ENCODE measurements at regions of chr7 and their contacts with region 1.

Region 1: GRCh38 chr7:134875867-134876266 is 96.4 kb downstream of the CALD1 start:
- DNase-seq: no peak

Region 2: GRCh38 chr7:134852625-134853024 is 23.2 kb before region 1 on chr7:
- intact Hi-C with region 1: loop called (anchors 1 kb)
- DNase-seq: no peak

Region 3: DNA sequence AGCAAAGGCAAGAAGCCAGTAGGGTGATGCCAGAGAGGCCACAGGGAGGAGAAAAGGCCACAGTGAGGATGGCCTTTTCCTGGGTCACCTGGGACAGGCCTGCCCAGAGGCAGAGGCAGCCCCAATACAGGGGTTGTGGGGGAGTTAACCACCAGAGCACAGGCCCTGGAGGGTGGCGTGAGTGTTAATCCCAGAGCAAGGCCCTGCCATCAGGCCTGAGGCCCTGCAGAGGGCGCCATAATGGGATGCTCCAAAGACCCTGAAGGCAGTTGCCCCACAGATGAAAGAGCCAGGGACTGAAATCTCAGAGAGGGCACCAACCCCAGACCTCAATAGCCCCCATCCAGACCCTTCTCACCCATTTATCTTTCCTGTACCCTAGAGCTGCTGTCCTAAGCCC is 828.2 kb after region 1 on chr7:
- intact Hi-C with region 1: no loop called
- DNase-seq: no peak

Measured in cardiac septum (tissue), 1 donor.